ENCODE measurements at regions of chr18 and their contacts with region 1.

Region 1: GRCh38 chr18:35580701-35581539 is 620 bp upstream of the GALNT1 start:
- DNase-seq: peak; percentile 35 to 78 (median 53)
- H3K4me3 ChIP-seq: peak overlapping the region; percentile 58 to 93 (median 79)
- H3K27ac ChIP-seq: peak overlapping the region; percentile 70 to 98 (median 94)
- H3K27me3 ChIP-seq: no peaks in the 10 kb centered on the region
- CTCF ChIP-seq: peak in 2 of 56 donors; percentile 11 to 14

Region 2: DNA sequence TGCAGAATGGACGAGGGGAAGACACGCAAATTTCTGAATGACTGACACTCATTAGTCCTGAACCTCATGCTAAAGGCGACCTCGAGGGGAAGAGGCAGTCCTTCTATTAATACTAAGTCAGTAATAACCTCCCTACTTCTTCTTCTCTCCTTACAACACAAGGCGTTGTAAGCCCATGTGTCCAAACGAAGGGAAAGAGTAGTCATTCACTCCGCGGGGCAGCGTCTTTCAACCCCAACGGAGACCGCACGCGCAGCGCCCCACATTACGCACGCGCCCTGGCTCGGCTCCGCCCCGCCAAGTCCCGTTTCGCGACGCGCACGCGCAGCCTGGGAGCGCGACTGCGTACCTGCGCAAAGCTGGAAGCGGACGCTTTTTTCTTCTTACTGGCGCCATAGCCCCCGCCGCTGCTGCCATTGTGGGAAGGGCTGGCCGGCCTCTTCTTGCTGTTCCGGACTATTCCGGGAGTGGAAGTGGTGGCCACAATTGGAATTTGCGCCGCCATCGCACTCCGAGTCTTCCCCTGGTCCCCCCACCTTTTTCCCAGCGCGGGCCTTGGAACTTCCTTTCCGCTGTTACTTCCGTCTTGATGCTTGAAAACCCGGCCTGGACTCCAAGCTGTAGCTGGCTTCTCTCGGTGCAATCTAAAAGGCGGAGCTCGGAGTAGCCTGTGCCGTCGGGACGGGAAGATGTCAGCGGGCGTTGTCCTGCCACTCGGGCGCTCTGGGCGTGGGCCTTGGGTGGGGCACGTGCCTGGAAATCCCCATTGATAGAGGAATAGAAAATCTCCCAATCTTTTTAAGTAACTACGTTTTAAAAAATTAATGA is 83.3 kb before region 1 on chr18 and contains the start of gene INO80C:
- intact Hi-C with region 1: loop called (anchors 2 kb)
- DNase-seq: peak; percentile 73 to 91 (median 88)
- H3K4me3 ChIP-seq: peak within 1 kb of the TSS; percentile 52 to 92 (median 76)
- H3K27ac ChIP-seq: peak within 1 kb of the TSS; percentile 75 to 99 (median 94)
- H3K27me3 ChIP-seq: no peaks in the 10 kb centered on the region
- CTCF ChIP-seq: peak in 34 of 56 donors; percentile 5 to 51 (median 20)
- total RNA-seq, gene INO80C: 13.8 to 40.5 (median 27.1) TPM

Region 3: DNA sequence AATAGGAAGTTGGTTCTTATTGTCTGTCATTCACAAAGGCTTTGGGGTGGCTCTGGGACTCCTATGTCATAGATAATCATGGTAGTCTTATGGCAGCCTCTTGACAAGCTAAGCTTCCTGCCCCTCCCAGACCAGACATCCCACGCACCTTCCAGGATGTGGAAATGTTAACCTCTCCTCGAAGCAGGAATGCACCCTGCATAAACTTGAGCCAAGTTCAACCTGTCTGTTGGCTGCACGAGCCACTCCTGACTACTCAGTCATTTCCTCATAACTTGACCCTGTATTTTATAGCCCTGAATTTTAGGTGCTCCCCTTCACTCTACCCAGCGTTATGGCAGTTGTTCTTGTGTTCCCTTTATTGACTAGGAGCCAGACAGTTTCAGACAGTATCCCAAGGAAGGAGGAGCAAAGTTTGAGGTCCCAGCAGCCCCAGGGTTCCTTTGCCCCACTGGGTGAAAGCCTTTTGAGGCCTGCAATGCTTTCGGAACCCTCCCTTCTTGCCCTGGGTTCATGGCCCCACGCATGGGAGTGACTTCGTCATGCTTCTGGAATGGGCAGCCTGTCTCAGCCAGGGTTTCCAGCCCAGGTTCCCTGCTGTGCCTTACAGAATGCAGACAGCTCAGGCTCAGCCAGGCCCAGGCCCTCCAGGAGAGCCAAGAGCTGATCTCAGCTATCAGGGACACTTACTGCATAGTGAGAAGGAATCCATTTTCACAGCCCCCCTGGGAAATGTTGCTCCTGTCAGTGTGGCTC is 67.6 kb before region 1 on chr18:
- intact Hi-C with region 1: no loop called
- DNase-seq: peak in 1 of 10 donors; percentile 36
- H3K4me3 ChIP-seq: no peak overlapping the region
- H3K27ac ChIP-seq: peak overlapping the region in 3 of 59 donors; percentile 4 to 21 (median 7)
- H3K27me3 ChIP-seq: no peaks in the 10 kb centered on the region
- CTCF ChIP-seq: no peak

Region 4: GRCh38 chr18:35619464-35619863 is 38.5 kb after region 1 on chr18:
- intact Hi-C with region 1: loop called in 1 of 2 experiments (anchors 2 kb)
- DNase-seq: peak in 6 of 10 donors; percentile 32 to 72 (median 42)
- H3K4me3 ChIP-seq: peak overlapping the region in 13 of 59 donors; percentile 0 to 31 (median 11)
- H3K27ac ChIP-seq: peak overlapping the region in 50 of 59 donors; percentile 3 to 82 (median 59)
- H3K27me3 ChIP-seq: peaks cover 0 to 3% (median 0%) of the 10 kb centered on the region in 45 donors
- CTCF ChIP-seq: peak in 6 of 56 donors; percentile 16 to 35 (median 24)

Region 5: DNA sequence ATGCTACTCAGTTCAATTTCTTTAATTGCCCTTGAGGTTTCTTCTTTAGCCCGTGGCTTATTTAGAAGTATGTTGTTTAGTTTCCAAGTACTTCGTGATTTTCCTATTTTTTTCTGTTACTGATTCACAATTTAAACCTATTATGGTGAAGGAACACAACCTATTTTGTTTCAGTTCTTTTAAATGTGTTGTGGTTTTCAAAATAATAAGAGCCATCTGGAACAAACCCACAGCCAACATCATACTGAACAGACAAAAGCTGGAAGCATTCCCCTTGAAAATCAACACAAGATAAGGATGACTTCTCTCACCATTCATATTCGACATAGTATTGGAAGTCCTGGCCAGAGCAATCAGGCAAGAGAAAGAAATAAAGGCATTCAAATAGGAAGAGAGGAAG is 155.8 kb after region 1 on chr18:
- intact Hi-C with region 1: no loop called
- DNase-seq: no peak
- H3K4me3 ChIP-seq: no peak overlapping the region
- H3K27ac ChIP-seq: no peak overlapping the region
- H3K27me3 ChIP-seq: no peaks in the 10 kb centered on the region
- CTCF ChIP-seq: no peak

Measured in dorsolateral prefrontal cortex (tissue), 120 donors.